Endothelial cell of umbilical vein (primary cell): ENCODE measurements at regions of chr1 and their contacts with region 1.

Region 1: DNA sequence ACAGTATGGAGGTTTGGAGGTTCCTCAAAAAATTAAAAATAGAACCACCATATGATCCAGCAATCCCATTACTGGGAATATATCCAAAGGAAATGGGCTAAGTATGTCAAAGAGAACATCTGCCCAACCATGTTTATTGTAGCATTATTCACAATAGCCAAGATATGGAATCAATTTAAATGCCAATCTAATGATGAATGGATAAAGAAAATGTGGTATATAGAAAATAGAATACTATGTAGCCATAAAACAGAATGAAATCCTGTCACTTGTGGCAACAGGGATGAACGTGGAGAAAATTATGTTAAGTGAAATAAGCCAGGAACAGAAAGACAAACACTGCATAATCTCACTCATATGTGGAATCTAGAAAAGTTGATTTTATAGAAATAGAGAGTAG is 201.7 kb upstream of the AJAP1 start:
- DNase-seq: no peak
- H3K4me3 ChIP-seq: no peak overlapping the region
- H3K27ac ChIP-seq: no peak overlapping the region
- H3K4me1 ChIP-seq: no peaks in the 10 kb centered on the region
- H3K27me3 ChIP-seq: no peaks in the 10 kb centered on the region
- CTCF ChIP-seq: no peak
- POLR2A ChIP-seq: no peak

Region 2: DNA sequence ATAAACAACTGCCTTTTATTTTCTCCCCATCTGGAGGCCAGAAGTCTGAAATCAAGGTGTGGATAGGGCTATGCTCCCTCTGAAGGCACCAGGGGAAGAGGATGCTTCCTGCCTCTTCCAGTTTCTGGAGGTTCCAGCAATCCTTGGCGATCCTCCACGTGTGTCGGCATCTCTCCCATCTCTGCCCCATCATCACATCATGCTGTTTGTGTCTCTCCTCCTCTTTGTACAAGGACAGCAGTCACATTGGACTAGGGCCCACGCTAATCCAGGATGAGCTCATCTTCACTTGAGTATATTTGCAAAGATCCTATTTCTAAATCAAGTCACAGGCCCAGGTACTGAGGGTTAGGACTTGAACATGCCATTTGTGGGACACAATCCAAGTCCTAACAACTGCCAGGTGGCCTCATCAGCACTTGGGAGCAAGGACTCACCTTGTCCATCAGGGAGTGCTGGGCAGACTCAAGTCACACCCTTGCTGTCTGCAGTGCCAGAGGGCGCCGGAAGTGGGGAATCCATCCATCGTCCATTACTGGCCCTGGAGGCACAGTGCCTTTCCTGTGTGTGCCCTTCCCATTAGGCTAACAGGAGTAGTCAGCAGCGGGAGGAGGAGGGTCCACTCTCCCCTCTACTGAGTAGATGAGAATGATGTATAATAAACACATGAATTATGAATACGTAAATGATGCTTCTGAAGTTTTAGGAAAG is 16.3 kb after region 1 on chr1:
- CTCF ChIA-PET with region 1: no interaction called
- POLR2A ChIA-PET with region 1: no interaction called
- dilution Hi-C with region 1: no loop called
- intact Hi-C with region 1: loop called (anchors 1 kb)
- DNase-seq: no peak
- H3K4me3 ChIP-seq: no peak overlapping the region
- H3K27ac ChIP-seq: no peak overlapping the region
- H3K4me1 ChIP-seq: no peaks in the 10 kb centered on the region
- H3K27me3 ChIP-seq: no peaks in the 10 kb centered on the region
- CTCF ChIP-seq: no peak
- POLR2A ChIP-seq: no peak